ENCODE measurements at regions of chr1 and their contacts with region 1.

Region 1: GRCh38 chr1:40612345-40612831 is 53.1 kb downstream of the RIMS3 start:
- DNase-seq: peak; percentile 27
- ATAC-seq: peak; percentile 96
- H3K4me3 Mint-ChIP-seq: no peak overlapping the region
- H3K27ac Mint-ChIP-seq: no peak overlapping the region
- H3K4me1 Mint-ChIP-seq: no peaks in the 10 kb centered on the region
- H3K27me3 Mint-ChIP-seq: peaks cover 2% of the 10 kb centered on the region
- CTCF ChIP-seq: peak; percentile 52

Region 2: DNA sequence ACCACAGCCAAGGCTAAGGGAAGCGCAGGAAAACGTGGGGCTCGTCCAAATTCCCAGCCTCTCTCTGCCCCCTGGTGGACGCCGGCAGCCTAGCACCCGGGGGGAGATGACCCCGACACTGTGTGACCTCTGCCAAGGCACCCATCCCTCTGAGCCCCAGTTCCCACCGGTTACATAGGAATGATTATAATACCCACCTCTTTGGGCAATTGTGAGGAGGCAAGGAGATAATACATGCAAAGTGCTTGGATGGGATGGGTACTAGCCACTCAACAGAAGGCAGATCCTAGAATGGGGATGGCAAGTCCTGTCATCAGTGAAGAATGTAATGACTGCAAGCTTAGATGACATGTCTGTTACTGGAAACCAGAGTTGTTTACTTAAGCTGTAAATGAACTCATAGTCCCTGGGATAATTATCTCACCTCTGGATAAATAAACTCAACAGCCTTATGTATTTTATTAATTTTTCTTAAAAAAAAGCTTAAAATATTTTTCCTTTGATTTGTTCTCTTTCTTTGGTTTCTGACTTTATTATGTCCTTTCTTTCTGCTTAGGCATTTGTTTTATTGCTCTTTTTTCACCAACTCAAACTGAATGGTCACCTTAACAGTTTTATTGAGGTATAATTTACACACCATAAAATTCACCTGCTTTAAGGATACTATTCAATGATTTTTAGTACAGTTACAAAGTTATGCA is 812.5 kb before region 1 on chr1:
- CTCF ChIA-PET with region 1: no interaction called
- POLR2A ChIA-PET with region 1: no interaction called
- intact Hi-C with region 1: no loop called
- DNase-seq: peak; percentile 64
- ATAC-seq: peak; percentile 68
- H3K4me3 Mint-ChIP-seq: peak overlapping the region; percentile 81
- H3K27ac Mint-ChIP-seq: peak overlapping the region; percentile 93
- H3K4me1 Mint-ChIP-seq: peaks cover 11% of the 10 kb centered on the region
- H3K27me3 Mint-ChIP-seq: no peaks in the 10 kb centered on the region
- CTCF ChIP-seq: no peak

Region 3: DNA sequence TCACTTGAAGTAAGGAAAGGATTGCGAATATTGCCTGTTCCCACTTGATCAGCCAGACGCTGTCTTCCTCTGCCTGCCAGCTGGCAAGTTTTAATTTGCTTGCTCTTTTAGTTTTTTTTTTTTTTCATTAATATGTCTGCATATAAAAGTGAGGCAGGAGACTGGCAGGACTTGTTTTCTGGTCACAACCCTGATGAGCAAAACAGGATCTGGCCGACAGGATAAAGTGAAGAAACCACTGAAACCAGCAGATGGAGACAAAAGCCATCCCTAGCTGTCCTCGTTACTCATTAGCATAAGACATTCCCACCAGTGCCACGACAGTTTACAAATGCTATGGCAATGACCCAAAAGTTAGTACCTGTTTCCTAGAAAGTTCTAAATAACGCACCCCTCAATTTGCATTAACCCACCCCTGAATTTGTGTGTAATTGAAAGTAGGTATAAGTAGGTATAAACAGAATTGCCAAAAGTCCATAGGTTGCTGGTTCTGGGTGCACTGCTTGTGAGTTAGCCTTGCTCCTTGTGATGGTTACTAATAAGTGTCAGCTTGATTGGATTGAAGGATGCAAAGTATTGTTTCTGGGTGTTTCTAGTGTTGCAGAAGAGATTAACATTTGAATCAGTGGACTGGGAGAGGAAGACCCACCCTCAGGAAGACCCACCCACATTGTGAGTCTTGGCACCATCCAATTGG is 20.1 kb before region 1 on chr1:
- CTCF ChIA-PET with region 1: no interaction called
- POLR2A ChIA-PET with region 1: no interaction called
- intact Hi-C with region 1: no loop called
- DNase-seq: no peak
- ATAC-seq: no peak
- H3K4me3 Mint-ChIP-seq: no peak overlapping the region
- H3K27ac Mint-ChIP-seq: no peak overlapping the region
- H3K4me1 Mint-ChIP-seq: no peaks in the 10 kb centered on the region
- H3K27me3 Mint-ChIP-seq: peaks cover 7% of the 10 kb centered on the region
- CTCF ChIP-seq: no peak

Region 4: DNA sequence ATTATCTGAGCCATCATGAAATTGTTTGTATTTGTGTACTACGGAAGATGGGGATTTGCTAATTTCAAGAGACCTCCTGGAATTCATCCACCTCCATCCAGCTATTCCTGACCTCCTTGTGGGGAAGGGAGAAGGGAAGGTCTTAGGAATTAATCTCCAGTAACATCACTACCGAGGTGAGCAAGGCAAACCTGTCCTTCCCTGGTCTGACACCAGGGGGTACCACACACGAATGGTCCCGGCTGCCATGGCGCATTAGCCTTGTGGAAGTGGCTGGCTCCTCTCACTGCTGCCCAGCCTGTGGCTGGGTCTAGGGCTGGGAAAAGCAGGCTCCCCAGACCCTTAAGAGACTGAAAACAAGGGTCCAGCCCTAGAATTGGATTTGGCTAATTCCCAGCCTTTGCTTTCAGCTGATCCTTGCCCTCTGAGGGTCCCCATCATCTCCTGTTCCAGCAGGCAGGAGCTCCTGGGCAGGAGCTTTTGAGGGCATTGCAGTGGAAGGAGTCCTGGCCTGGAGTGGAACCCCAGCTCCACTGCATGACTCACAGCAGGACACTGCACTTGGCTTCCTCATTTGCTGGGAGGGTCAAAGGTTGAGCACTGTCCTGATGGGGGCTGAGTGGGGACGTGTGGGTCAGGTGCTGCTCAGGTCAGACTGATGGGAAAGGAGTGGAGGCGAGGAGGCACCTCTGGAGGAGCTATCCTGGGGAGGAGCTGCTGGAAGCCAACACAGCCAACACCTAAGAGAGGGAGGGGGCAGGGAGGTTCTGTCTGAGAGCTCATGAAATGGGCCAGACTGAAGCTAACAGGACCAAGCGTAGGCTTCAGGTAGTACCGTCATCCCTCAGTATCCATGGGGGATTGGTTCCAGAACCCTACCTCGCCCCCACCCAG is 18.3 kb after region 1 on chr1:
- CTCF ChIA-PET with region 1: no interaction called
- POLR2A ChIA-PET with region 1: no interaction called
- intact Hi-C with region 1: no loop called
- DNase-seq: no peak
- ATAC-seq: peak; percentile 62
- H3K4me3 Mint-ChIP-seq: no peak overlapping the region
- H3K27ac Mint-ChIP-seq: no peak overlapping the region
- H3K4me1 Mint-ChIP-seq: peaks cover 22% of the 10 kb centered on the region
- H3K27me3 Mint-ChIP-seq: no peaks in the 10 kb centered on the region
- CTCF ChIP-seq: no peak

Region 5: GRCh38 chr1:40722636-40723035 is 110.2 kb after region 1 on chr1:
- CTCF ChIA-PET with region 1: interaction called, 4 read pairs
- POLR2A ChIA-PET with region 1: interaction called, 3 read pairs
- intact Hi-C with region 1: loop called (anchors 5 kb)
- DNase-seq: no peak
- ATAC-seq: no peak
- H3K4me3 Mint-ChIP-seq: no peak overlapping the region
- H3K27ac Mint-ChIP-seq: peak overlapping the region; percentile 7
- H3K4me1 Mint-ChIP-seq: peaks cover 68% of the 10 kb centered on the region
- H3K27me3 Mint-ChIP-seq: no peaks in the 10 kb centered on the region
- CTCF ChIP-seq: no peak

Region 6: DNA sequence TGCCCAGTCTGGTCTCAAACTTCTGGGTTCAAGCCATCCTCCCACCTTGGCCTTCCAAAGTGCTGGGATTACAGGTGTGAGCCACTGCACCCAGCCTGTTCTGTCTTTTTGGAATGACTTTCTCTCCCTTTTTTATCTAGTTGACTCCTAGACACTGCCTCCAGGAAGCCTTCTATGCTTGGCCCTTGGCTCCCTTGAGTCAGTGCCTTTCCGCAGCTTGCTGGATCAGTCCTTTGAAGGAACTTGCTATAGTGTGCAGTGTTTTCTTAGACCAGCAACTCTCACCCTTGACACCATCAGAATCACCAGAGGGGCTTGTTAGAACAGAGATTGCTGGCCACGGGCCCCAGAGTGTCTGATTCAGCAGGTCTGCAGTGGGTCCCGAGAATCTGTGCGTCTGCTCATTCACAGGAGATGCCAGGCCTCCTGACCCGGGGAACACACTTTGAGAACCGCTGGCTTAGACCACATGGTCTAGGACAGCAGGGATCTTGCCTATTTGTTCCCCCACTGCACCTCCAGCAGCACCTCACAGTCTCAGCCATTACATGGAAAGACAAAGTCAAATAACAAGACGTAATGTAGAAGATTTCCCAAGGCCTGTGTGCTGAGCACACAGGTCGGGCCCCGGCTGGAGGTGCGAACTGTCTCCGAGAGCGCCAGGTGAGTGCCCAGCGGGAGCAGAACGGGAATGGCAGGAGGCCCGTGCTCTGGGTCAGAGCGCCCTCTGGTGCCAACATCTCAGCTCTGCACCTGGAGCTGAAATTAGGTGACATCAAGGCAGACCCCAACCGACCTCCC is 339.8 kb after region 1 on chr1:
- CTCF ChIA-PET with region 1: interaction called, 5 read pairs
- POLR2A ChIA-PET with region 1: no interaction called
- intact Hi-C with region 1: loop called (anchors 1 kb)
- DNase-seq: peak; percentile 47
- ATAC-seq: peak; percentile 64
- H3K4me3 Mint-ChIP-seq: no peak overlapping the region
- H3K27ac Mint-ChIP-seq: peak overlapping the region; percentile 42
- H3K4me1 Mint-ChIP-seq: peaks cover 5% of the 10 kb centered on the region
- H3K27me3 Mint-ChIP-seq: peaks cover 36% of the 10 kb centered on the region
- CTCF ChIP-seq: peak; percentile 23

Measured in activated B cell treated with CpG ODN at 0.5 μM for 24 hours (primary cell).